Right cardiac atrium (tissue), 5 donors: ENCODE measurements at regions of chr11 and their contacts with region 1.

Region 1: GRCh38 chr11:46006418-46007070 is 84.1 kb downstream of the LARGE2 start:
- DNase-seq: no peak
- ATAC-seq: peak; percentile 71 to 81
- H3K4me3 ChIP-seq: no peak overlapping the region
- H3K27ac ChIP-seq: no peak overlapping the region
- H3K4me1 ChIP-seq: peaks cover 2% of the 10 kb centered on the region
- H3K27me3 ChIP-seq: no peaks in the 10 kb centered on the region

Region 2: GRCh38 chr11:45846974-45847910 is 159.3 kb before region 1 on chr11 and contains the start of gene CRY2:
- intact Hi-C with region 1: loop called in 1 of 4 experiments (anchors 10 kb)
- DNase-seq: peak; percentile 99 to 100 (median 100)
- ATAC-seq: peak; percentile 98
- H3K4me3 ChIP-seq: peak within 1 kb of the TSS; percentile 90
- H3K27ac ChIP-seq: peak within 1 kb of the TSS; percentile 94
- H3K4me1 ChIP-seq: peaks cover 8% of the 10 kb centered on the region
- H3K27me3 ChIP-seq: no peaks in the 10 kb centered on the region
- total RNA-seq, gene CRY2: 67.7 to 82.1 (median 74.4) TPM

Region 3: GRCh38 chr11:45899448-45900173 is 106.9 kb before region 1 on chr11:
- intact Hi-C with region 1: no loop called
- DNase-seq: peak; percentile 92 to 96 (median 94)
- ATAC-seq: peak; percentile 85 to 90
- H3K4me3 ChIP-seq: peak overlapping the region; percentile 54
- H3K27ac ChIP-seq: no peak overlapping the region
- H3K4me1 ChIP-seq: peaks cover 7% of the 10 kb centered on the region
- H3K27me3 ChIP-seq: no peaks in the 10 kb centered on the region

Region 4: DNA sequence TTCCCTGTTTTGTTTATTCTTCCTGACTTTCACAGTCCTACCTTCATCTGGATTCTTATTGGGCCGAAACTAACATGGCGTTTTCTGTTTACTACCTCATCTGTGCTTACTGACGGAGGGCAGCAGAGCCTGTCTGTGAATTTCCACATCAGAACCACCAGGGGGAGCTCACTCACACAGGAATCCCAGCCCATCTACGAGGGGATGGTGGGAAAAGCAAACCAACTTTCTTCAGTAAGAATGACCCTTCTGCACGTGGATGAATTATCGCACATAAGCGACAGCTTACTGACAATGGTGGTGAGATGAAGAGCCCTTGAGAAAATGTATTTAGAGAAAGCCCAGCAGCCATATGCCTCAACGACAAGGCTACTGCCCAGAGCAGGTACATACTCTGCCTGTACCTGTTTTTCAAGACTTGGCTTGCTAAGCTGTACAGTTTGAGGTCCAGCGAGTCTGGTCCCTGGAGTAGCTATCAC is 41.6 kb before region 1 on chr11:
- intact Hi-C with region 1: loop called in 2 of 4 experiments (anchors 5 kb)
- DNase-seq: peak; percentile 37 to 67 (median 65)
- ATAC-seq: peak; percentile 85 to 89
- H3K4me3 ChIP-seq: no peak overlapping the region
- H3K27ac ChIP-seq: no peak overlapping the region
- H3K4me1 ChIP-seq: no peaks in the 10 kb centered on the region
- H3K27me3 ChIP-seq: no peaks in the 10 kb centered on the region